Panc1 (cell line): ENCODE measurements at regions of chr3 and their contacts with region 1.

Region 1: DNA sequence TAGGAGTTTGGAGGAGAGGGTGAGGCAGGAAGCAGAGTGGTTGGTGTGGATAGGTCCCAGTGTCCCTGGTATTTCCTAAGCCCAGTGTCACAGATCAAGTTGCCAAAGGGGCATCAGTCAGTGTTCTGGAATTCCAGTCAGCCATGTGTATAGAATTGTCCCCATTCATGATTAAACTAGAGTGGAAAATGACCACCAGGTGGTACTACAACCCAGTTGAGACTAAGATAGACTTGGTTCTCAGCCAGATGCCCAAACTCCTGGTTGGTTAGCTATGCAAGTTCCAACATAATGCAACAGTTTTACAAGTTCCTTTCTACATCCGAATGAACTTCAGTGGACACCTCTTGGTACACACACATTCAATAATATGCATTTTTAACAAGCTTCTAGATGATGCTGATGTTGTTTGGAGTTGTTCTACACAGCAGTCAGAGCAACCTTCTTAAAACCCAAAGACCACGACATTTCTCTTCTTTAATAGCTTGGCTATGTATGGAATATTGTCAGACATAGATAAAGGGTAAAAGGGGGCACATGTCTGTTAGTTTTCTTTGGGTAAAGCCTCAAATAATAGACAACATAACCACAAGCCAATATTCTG is 8.4 kb upstream of the ATR start:
- DNase-seq: peak; percentile 87
- ATAC-seq: peak; percentile 95
- H3K4me3 ChIP-seq: no peak overlapping the region
- H3K27ac ChIP-seq: no peak overlapping the region
- H3K4me1 ChIP-seq: 0 out of 2 replicates have a peak, but pooled peaks cover 3% of the 10 kb centered on the region
- H3K27me3 ChIP-seq: no peaks in the 10 kb centered on the region
- CTCF ChIP-seq: peak; percentile 85

Region 2: DNA sequence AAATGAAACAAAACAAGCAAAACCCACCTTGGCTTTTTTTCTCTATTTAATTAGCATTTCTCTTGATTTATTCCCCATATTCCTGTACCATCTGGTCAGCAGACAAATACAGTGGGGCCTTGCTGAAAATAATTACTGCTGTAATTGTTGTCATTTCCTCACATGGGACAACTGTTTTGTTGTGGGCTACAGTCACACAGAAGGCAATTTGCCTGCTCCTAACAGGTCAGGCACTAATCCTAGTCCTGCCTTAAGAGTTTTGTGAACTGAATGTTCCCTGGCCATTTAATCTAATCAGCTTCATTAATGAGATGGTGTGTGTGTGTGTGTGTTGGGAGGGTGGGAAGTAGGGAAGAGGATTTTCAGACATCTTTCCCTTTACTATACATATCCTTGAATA is 148.6 kb after region 1 on chr3:
- CTCF ChIA-PET with region 1: interaction called, 4 read pairs
- POLR2A ChIA-PET with region 1: no interaction called
- in situ Hi-C with region 1: no loop called
- intact Hi-C with region 1: loop called (anchors 5 kb)
- DNase-seq: no peak
- ATAC-seq: no peak
- H3K4me3 ChIP-seq: no peak overlapping the region
- H3K27ac ChIP-seq: no peak overlapping the region
- H3K4me1 ChIP-seq: no peaks in the 10 kb centered on the region
- H3K27me3 ChIP-seq: no peaks in the 10 kb centered on the region
- CTCF ChIP-seq: no peak

Region 3: DNA sequence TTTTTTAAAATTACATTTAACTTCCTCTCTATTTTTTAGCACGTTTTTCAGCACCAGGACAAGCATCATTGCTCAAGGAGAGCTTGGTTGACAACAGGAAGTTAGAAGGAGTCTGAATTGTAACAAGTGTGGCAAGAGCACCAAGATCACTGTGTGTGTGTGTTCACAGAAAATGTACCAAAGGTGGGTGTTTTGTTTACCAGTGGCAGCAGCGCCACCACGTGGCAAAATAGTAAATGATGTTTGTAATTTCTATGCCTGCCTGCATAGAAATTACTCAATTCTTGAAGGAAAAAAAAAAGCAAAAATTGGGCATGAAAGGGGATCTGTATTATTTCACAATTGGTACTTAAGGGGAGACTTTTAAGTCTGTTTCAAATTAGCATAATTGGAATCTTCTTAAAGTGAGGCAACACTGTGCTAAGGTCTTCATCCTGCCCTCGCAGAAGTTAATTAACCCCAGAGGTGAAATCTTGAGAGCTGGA is 407.1 kb after region 1 on chr3:
- CTCF ChIA-PET with region 1: interaction called, 3 read pairs
- POLR2A ChIA-PET with region 1: no interaction called
- in situ Hi-C with region 1: no loop called
- intact Hi-C with region 1: loop called (anchors 2 kb)
- DNase-seq: no peak
- ATAC-seq: peak; percentile 74; the same call in 1 of the 2 replicates
- H3K4me3 ChIP-seq: no peak overlapping the region
- H3K27ac ChIP-seq: no peak overlapping the region
- H3K4me1 ChIP-seq: peaks cover 25% of the 10 kb centered on the region
- H3K27me3 ChIP-seq: no peaks in the 10 kb centered on the region
- CTCF ChIP-seq: peak; percentile 89